GM12878 (cell line): ENCODE measurements at regions of chr3 and their contacts with region 1.

Region 1: GRCh38 chr3:124467980-124468902 is 262.0 kb upstream of the UMPS start:
- DNase-seq: no peak
- ATAC-seq: peak; percentile 92
- H3K4me3 ChIP-seq: no peak overlapping the region
- H3K27ac ChIP-seq: no peak overlapping the region
- H3K4me1 ChIP-seq: no peaks in the 10 kb centered on the region
- H3K27me3 ChIP-seq: no peaks in the 10 kb centered on the region; a peak in 1 of 4 replicates
- CTCF ChIP-seq: peak; percentile 93 to 98 (median 94); a peak in 5 of 6 replicates
- EP300 ChIP-seq: no peak
- POLR2A ChIP-seq: no peak
- RAD21 ChIP-seq: peak; percentile 96

Region 2: DNA sequence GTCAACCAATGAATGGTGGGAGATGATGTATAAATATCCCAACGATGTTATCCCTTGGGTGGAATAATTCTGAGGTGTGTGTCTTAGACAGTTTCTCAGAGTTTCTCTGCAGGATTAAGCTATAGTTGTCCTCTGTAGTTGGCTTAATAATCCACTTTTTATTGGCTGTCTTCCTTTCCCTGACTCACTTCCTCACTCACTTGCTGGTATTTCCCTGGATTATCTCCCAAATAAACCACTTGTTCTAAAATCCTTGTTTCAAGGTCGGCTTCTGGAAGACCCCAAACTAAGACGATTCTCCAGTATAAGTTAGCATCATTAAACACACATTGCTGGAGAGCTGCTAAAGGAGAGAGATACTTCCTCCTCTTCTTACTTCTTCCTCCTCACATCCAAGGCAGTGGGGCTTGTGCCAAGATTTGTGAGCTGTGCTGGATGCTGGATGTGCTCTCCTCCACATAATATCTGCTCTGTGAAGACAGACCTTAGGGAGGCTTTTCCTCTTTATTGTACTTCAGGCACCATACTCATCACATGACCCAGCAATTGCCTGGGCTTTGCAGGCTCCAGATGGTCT is 453.8 kb before region 1 on chr3:
- CTCF ChIA-PET with region 1: interaction called, 5 read pairs
- POLR2A ChIA-PET with region 1: no interaction called
- RAD21 ChIA-PET with region 1: interaction called, 3 read pairs
- SMC1A ChIA-PET with region 1: interaction called, 11 read pairs
- in situ Hi-C with region 1: loop called (anchors 10 kb)
- intact Hi-C with region 1: loop called (anchors 1 kb)
- DNase-seq: no peak
- ATAC-seq: no peak
- H3K4me3 ChIP-seq: no peak overlapping the region
- H3K27ac ChIP-seq: no peak overlapping the region
- H3K4me1 ChIP-seq: no peaks in the 10 kb centered on the region
- H3K27me3 ChIP-seq: no peaks in the 10 kb centered on the region
- CTCF ChIP-seq: no peak
- EP300 ChIP-seq: no peak
- POLR2A ChIP-seq: no peak
- RAD21 ChIP-seq: no peak

Region 3: DNA sequence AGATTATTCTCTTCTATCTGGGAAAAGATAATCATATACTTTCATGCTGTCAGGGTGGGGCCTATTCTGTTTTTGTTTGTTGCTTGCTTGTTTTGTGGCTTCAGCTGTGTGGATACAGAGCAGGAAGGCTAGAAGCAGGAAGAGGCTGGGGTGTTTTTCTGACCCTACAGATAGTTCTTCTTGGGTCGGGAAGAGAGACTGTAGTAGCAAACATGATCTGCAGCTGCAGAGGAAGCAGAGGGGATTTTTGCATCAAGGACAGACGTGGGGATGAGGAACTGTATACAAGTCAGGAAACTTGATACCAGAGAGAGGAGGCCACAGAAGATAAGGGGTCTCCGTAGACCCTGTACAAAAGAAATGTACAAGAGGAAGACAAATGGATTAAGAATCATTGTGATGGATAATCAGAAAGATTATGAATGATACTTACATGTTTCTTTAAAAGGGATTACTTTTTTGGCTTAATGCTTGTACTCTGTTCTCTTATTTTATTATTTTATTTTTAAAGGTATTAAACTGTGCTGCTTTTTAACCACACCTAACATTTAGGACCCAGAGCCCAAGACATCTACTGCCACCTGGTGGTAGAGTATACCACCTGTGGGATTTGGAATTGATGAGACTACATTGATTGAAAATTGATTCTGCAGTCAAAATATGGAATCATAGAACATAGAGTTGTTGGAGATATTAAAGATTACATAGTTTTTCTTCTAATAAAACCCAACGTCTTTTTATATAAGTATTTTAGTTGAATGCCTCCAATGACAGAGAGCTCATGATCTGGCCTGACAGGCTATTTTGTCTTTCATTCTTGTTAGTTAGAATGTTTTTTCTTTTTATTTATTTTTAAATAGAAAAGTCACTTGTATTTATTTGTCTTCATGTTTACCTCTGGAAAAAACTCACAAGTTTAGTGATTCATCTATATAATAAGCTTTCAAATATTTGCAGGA is 389.0 kb before region 1 on chr3:
- CTCF ChIA-PET with region 1: interaction called, 3 read pairs
- POLR2A ChIA-PET with region 1: no interaction called
- RAD21 ChIA-PET with region 1: no interaction called
- SMC1A ChIA-PET with region 1: no interaction called
- in situ Hi-C with region 1: no loop called
- intact Hi-C with region 1: loop called (anchors 5 kb)
- DNase-seq: no peak
- ATAC-seq: peak; percentile 64; the same call in 2 of the 3 replicates
- H3K4me3 ChIP-seq: no peak overlapping the region
- H3K27ac ChIP-seq: no peak overlapping the region
- H3K4me1 ChIP-seq: no peaks in the 10 kb centered on the region
- H3K27me3 ChIP-seq: peaks cover 0 to 5% of the 10 kb centered on the region in 2 experiments; a peak in 2 of 4 replicates
- CTCF ChIP-seq: peak; percentile 53 to 63 (median 59)
- EP300 ChIP-seq: no peak
- POLR2A ChIP-seq: no peak
- RAD21 ChIP-seq: peak; percentile 70

Region 4: GRCh38 chr3:124217542-124217941 is 250.7 kb before region 1 on chr3:
- CTCF ChIA-PET with region 1: no interaction called
- POLR2A ChIA-PET with region 1: no interaction called
- RAD21 ChIA-PET with region 1: no interaction called
- SMC1A ChIA-PET with region 1: no interaction called
- in situ Hi-C with region 1: no loop called
- intact Hi-C with region 1: no loop called
- DNase-seq: no peak
- ATAC-seq: peak; percentile 69
- H3K4me3 ChIP-seq: no peak overlapping the region
- H3K27ac ChIP-seq: no peak overlapping the region
- H3K4me1 ChIP-seq: no peaks in the 10 kb centered on the region
- H3K27me3 ChIP-seq: no peaks in the 10 kb centered on the region; a peak in 1 of 4 replicates
- CTCF ChIP-seq: no peak
- EP300 ChIP-seq: no peak
- POLR2A ChIP-seq: no peak
- RAD21 ChIP-seq: no peak

Region 5: DNA sequence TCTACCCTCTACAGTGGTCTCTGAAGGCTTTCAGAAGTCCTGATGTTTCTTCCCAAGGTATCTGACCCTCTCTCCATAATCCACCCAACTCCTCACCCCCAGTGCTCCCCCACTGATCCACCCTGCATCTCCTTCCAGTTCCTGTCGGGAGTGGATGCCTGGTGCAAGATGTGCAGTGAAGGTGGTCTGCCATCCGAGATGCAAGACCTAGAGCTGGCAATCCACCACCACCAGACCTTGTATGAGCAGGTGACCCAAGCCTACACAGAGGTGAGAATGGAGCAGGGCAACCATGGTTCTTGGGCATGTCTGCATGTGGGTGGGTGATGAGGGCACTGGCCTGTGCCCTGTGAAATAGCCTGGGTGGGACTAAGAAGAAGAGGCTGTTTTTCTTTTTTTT is 138.5 kb before region 1 on chr3:
- CTCF ChIA-PET with region 1: no interaction called
- POLR2A ChIA-PET with region 1: no interaction called
- RAD21 ChIA-PET with region 1: no interaction called
- SMC1A ChIA-PET with region 1: no interaction called
- in situ Hi-C with region 1: no loop called
- intact Hi-C with region 1: no loop called
- DNase-seq: no peak
- ATAC-seq: no peak
- H3K4me3 ChIP-seq: no peak overlapping the region
- H3K27ac ChIP-seq: no peak overlapping the region
- H3K4me1 ChIP-seq: no peaks in the 10 kb centered on the region
- H3K27me3 ChIP-seq: no peaks in the 10 kb centered on the region; a peak in 1 of 4 replicates
- CTCF ChIP-seq: no peak
- EP300 ChIP-seq: no peak
- POLR2A ChIP-seq: no peak
- RAD21 ChIP-seq: no peak

Region 6: GRCh38 chr3:124351430-124352148 is 116.7 kb before region 1 on chr3:
- CTCF ChIA-PET with region 1: interaction called, 138 read pairs
- POLR2A ChIA-PET with region 1: no interaction called
- RAD21 ChIA-PET with region 1: interaction called, 9 read pairs
- SMC1A ChIA-PET with region 1: interaction called, 28 read pairs
- in situ Hi-C with region 1: loop called (anchors 5 kb)
- intact Hi-C with region 1: loop called (anchors 1 kb)
- DNase-seq: no peak
- ATAC-seq: peak; percentile 45; the same call in 1 of the 3 replicates
- H3K4me3 ChIP-seq: no peak overlapping the region
- H3K27ac ChIP-seq: no peak overlapping the region
- H3K4me1 ChIP-seq: no peaks in the 10 kb centered on the region
- H3K27me3 ChIP-seq: no peaks in the 10 kb centered on the region; a peak in 1 of 4 replicates
- CTCF ChIP-seq: peak; percentile 33 to 57 (median 44); a peak in 5 of 6 replicates
- EP300 ChIP-seq: no peak
- POLR2A ChIP-seq: no peak
- RAD21 ChIP-seq: peak; percentile 87

Region 7: GRCh38 chr3:124442465-124442864 is 25.8 kb before region 1 on chr3:
- CTCF ChIA-PET with region 1: interaction called, 10 read pairs
- POLR2A ChIA-PET with region 1: no interaction called
- RAD21 ChIA-PET with region 1: no interaction called
- SMC1A ChIA-PET with region 1: interaction called, 5 read pairs
- in situ Hi-C with region 1: no loop called
- intact Hi-C with region 1: no loop called
- DNase-seq: no peak
- ATAC-seq: no peak
- H3K4me3 ChIP-seq: no peak overlapping the region
- H3K27ac ChIP-seq: no peak overlapping the region
- H3K4me1 ChIP-seq: no peaks in the 10 kb centered on the region
- H3K27me3 ChIP-seq: no peaks in the 10 kb centered on the region; a peak in 1 of 4 replicates
- CTCF ChIP-seq: no peak
- EP300 ChIP-seq: no peak
- POLR2A ChIP-seq: no peak
- RAD21 ChIP-seq: no peak

Region 8: GRCh38 chr3:124456506-124456905 is 11.7 kb before region 1 on chr3:
- CTCF ChIA-PET with region 1: interaction called, 40 read pairs
- POLR2A ChIA-PET with region 1: no interaction called
- RAD21 ChIA-PET with region 1: no interaction called
- SMC1A ChIA-PET with region 1: interaction called, 4 read pairs
- in situ Hi-C with region 1: no loop called
- intact Hi-C with region 1: no loop called
- DNase-seq: no peak
- ATAC-seq: no peak
- H3K4me3 ChIP-seq: no peak overlapping the region
- H3K27ac ChIP-seq: no peak overlapping the region
- H3K4me1 ChIP-seq: peaks cover 2% of the 10 kb centered on the region; the same call in 1 of the 2 replicates
- H3K27me3 ChIP-seq: no peaks in the 10 kb centered on the region; a peak in 1 of 4 replicates
- CTCF ChIP-seq: no peak
- EP300 ChIP-seq: no peak
- POLR2A ChIP-seq: no peak
- RAD21 ChIP-seq: no peak

Region 9: GRCh38 chr3:124837730-124838186 is 369.5 kb after region 1 on chr3:
- CTCF ChIA-PET with region 1: no interaction called
- POLR2A ChIA-PET with region 1: no interaction called
- RAD21 ChIA-PET with region 1: no interaction called
- SMC1A ChIA-PET with region 1: no interaction called
- in situ Hi-C with region 1: no loop called
- intact Hi-C with region 1: no loop called
- DNase-seq: no peak
- ATAC-seq: no peak
- H3K4me3 ChIP-seq: no peak overlapping the region
- H3K27ac ChIP-seq: no peak overlapping the region
- H3K4me1 ChIP-seq: peaks cover 14% of the 10 kb centered on the region
- H3K27me3 ChIP-seq: no peaks in the 10 kb centered on the region; a peak in 1 of 4 replicates
- CTCF ChIP-seq: no peak
- EP300 ChIP-seq: no peak
- POLR2A ChIP-seq: no peak
- RAD21 ChIP-seq: no peak